Activated CD4-positive, alpha-beta memory T cell treated with anti-CD3 and anti-CD28 coated beads, Interleukin-2, amount 10 ng/mL, durations not matched to agents 7 days and 5 days (primary cell): ENCODE measurements at regions of chr11 and their contacts with region 1.

Region 1: GRCh38 chr11:67167086-67167485 is 48.0 kb downstream of the KDM2A start:
- DNase-seq: no peak
- H3K4me3 Mint-ChIP-seq: no peak overlapping the region
- H3K27ac Mint-ChIP-seq: no peak overlapping the region
- H3K4me1 Mint-ChIP-seq: peaks cover 9% of the 10 kb centered on the region
- H3K27me3 Mint-ChIP-seq: no peaks in the 10 kb centered on the region

Region 2: GRCh38 chr11:67082035-67082791 is 84.9 kb before region 1 on chr11:
- CTCF ChIA-PET with region 1: interaction called, 10 read pairs
- POLR2A ChIA-PET with region 1: no interaction called
- DNase-seq: no peak
- H3K4me3 Mint-ChIP-seq: no peak overlapping the region
- H3K27ac Mint-ChIP-seq: no peak overlapping the region
- H3K4me1 Mint-ChIP-seq: peaks cover 30% of the 10 kb centered on the region
- H3K27me3 Mint-ChIP-seq: peaks cover 6% of the 10 kb centered on the region

Region 3: GRCh38 chr11:67177399-67178281 is 10.6 kb after region 1 on chr11:
- CTCF ChIA-PET with region 1: interaction called, 13 read pairs
- POLR2A ChIA-PET with region 1: no interaction called
- DNase-seq: no peak
- H3K4me3 Mint-ChIP-seq: no peak overlapping the region
- H3K27ac Mint-ChIP-seq: no peak overlapping the region
- H3K4me1 Mint-ChIP-seq: peaks cover 8% of the 10 kb centered on the region
- H3K27me3 Mint-ChIP-seq: no peaks in the 10 kb centered on the region